ENCODE measurements at regions of chr1 and their contacts with region 1.

Region 1: DNA sequence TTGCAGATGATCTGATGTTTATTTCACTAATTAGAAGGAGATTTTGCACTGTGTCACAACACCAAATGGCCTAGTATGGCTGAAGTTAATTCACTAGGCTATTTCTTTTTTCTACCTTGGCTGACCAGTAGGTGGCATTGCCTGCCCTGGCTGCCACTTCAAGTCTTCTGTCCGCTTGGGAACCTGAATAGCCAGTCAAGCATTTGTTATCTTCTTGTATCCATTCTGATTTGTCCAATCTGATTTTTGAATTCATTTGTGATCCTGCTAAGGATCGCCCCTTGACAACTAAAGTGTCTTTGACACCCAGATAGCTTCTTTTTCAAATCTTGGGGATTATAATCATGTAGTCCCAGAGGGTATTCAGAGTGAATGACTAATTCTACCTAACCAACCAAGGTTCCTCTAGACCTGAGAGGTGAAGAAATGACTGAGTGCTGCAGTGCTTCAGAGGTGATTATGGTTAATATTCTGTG is 99.4 kb downstream of the GIPC2 start:
- DNase-seq: peak; percentile 36 to 57
- ATAC-seq: peak; percentile 62 to 90 (median 80)
- H3K4me3 ChIP-seq: no peak overlapping the region
- H3K27ac ChIP-seq: no peak overlapping the region
- H3K4me1 ChIP-seq: no peaks in the 10 kb centered on the region
- H3K27me3 ChIP-seq: no peaks in the 10 kb centered on the region
- CTCF ChIP-seq: peak; percentile 84

Region 2: GRCh38 chr1:78607334-78607927 is 462.3 kb after region 1 on chr1:
- intact Hi-C with region 1: loop called (anchors 5 to 10 kb)
- DNase-seq: no peak
- ATAC-seq: no peak
- H3K4me3 ChIP-seq: no peak overlapping the region
- H3K27ac ChIP-seq: no peak overlapping the region
- H3K4me1 ChIP-seq: no peaks in the 10 kb centered on the region
- H3K27me3 ChIP-seq: no peaks in the 10 kb centered on the region
- CTCF ChIP-seq: peak; percentile 40

Region 3: GRCh38 chr1:78617615-78618026 is 472.5 kb after region 1 on chr1:
- intact Hi-C with region 1: loop called in 1 of 2 experiments (anchors 10 kb)
- DNase-seq: peak; percentile 53 to 70
- ATAC-seq: peak; percentile 78 to 95 (median 92)
- H3K4me3 ChIP-seq: peak overlapping the region; percentile 14
- H3K27ac ChIP-seq: no peak overlapping the region
- H3K4me1 ChIP-seq: peaks cover 10% of the 10 kb centered on the region
- H3K27me3 ChIP-seq: no peaks in the 10 kb centered on the region
- CTCF ChIP-seq: peak; percentile 83

Region 4: GRCh38 chr1:78676347-78676982 is 531.3 kb after region 1 on chr1:
- intact Hi-C with region 1: loop called (anchors 5 kb)
- DNase-seq: no peak
- ATAC-seq: peak in 2 of 4 donors; percentile 51 to 73
- H3K4me3 ChIP-seq: no peak overlapping the region
- H3K27ac ChIP-seq: no peak overlapping the region
- H3K4me1 ChIP-seq: no peaks in the 10 kb centered on the region
- H3K27me3 ChIP-seq: no peaks in the 10 kb centered on the region
- CTCF ChIP-seq: peak; percentile 89

Measured in psoas muscle (tissue), 8 donors.